ENCODE measurements at regions of chr2 and their contacts with region 1.

Region 1: GRCh38 chr2:207238831-207239701 is 73.3 kb upstream of the KLF7 start:
- DNase-seq: no peak
- H3K4me3 Mint-ChIP-seq: peak overlapping the region; percentile 50
- H3K27ac Mint-ChIP-seq: peak overlapping the region; percentile 73
- H3K4me1 Mint-ChIP-seq: peaks cover 19% of the 10 kb centered on the region
- H3K27me3 Mint-ChIP-seq: no peaks in the 10 kb centered on the region

Region 2: GRCh38 chr2:207073801-207074678 is 165.0 kb before region 1 on chr2:
- intact Hi-C with region 1: loop called (anchors 5 kb)
- DNase-seq: peak; percentile 39
- H3K4me3 Mint-ChIP-seq: peak overlapping the region; percentile 71
- H3K27ac Mint-ChIP-seq: peak overlapping the region; percentile 79
- H3K4me1 Mint-ChIP-seq: peaks cover 46% of the 10 kb centered on the region
- H3K27me3 Mint-ChIP-seq: no peaks in the 10 kb centered on the region

Region 3: DNA sequence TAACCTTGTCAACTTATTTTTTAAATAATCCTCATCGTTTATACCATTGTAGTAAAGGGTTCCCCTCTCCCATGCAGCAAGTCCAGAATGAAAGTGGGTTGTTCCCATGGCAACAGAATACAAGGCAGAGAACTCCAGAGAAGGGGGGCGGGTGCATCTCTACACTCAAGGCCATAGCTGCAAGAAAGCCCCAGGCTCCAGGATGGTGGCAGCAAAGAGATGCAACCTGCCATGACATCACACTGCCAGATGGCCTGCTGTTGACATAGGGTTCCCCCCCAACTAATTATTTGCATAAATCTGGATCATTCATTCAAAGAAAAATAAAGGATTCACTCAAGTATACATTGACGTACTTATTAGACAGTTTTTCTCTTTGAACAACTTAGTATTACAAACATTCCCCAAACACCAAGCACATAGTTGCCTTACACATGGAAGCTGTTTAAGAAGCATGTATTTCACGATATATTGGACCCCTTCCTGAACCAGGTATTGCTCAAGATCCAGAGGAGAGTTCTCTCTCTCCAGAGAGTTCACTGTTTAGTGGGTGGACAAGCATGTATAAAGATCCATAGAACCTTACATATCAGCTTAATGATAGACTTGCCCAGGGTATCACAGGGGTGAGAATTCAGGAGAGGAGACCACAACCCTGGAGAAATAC is 14.0 kb after region 1 on chr2:
- intact Hi-C with region 1: loop called (anchors 1 kb)
- DNase-seq: no peak
- H3K4me3 Mint-ChIP-seq: no peak overlapping the region
- H3K27ac Mint-ChIP-seq: no peak overlapping the region
- H3K4me1 Mint-ChIP-seq: peaks cover 36% of the 10 kb centered on the region
- H3K27me3 Mint-ChIP-seq: peaks cover 2% of the 10 kb centered on the region

Region 4: GRCh38 chr2:207311316-207312005 is 72.4 kb after region 1 on chr2:
- intact Hi-C with region 1: loop called (anchors 1 kb)
- DNase-seq: no peak
- H3K4me3 Mint-ChIP-seq: no peak overlapping the region
- H3K27ac Mint-ChIP-seq: peak overlapping the region; percentile 88
- H3K4me1 Mint-ChIP-seq: peaks cover 49% of the 10 kb centered on the region
- H3K27me3 Mint-ChIP-seq: no peaks in the 10 kb centered on the region

Region 5: DNA sequence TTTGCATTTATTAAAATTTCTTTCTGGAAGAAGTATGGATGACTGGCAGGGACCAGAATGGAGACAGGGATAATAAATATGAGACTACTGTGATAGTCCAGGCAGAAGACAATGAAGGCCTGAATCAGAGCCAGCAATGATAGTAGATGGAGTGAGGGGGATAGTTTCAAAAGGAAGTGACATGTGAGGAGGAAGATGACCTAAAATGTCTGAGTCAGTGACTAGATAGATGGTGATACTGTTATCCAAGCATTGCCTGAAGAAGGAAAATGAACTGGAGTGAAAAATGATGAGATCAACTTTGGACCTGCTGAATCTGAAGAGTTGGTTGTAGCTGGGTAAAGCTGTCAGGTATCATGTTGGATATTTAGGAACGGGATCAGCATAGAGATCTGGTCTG is 84.9 kb after region 1 on chr2:
- intact Hi-C with region 1: no loop called
- DNase-seq: no peak
- H3K4me3 Mint-ChIP-seq: no peak overlapping the region
- H3K27ac Mint-ChIP-seq: no peak overlapping the region
- H3K4me1 Mint-ChIP-seq: peaks cover 37% of the 10 kb centered on the region
- H3K27me3 Mint-ChIP-seq: no peaks in the 10 kb centered on the region

Region 6: DNA sequence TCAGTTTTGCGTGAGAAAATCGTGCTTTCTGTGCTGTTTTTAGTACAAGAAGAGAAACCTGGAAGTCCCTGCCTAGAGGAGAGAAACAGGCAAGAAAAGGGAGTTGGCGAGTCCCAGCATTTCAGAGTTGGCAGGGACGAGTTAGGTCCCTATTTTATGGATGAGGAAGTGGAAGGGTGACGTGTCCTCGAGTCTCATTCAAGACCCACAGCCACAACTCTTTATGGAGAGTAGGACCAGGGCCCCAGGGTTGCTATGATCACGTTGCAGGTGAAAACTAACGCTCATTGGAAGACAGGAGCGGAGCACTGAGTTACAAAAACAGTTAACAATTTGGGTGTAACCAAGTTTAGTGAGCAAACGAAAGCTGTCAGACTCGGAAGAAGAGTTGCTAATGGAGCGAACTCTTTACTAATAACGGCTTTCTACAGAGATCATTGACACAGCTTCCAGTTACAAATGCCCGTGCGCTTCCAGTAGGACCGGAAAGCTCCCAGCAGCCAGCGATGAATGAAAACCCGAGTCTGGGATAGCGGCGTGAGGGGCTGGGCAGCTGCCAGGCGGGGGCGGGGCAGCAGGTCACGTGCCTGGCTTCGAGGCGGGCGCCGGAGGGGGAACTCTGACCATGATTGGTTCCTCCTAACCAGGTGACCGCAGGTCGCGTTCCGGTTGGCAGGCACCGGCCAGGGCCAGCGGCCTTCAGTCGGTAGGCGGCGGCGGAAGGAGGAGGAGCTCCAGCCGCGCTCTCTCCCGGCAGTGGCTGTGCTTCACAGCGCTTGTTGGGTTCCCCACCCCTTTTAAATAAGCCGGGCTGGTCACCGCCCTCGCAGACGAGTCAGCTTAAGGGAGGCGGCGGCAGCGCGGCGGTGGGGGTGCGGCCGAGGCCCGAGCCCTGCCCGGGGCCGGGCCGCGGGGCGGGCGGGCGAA is 472.0 kb after region 1 on chr2 and contains the start of gene CCNYL1:
- intact Hi-C with region 1: loop called (anchors 5 kb)
- DNase-seq: peak; percentile 98
- H3K4me3 Mint-ChIP-seq: peak within 1 kb of the TSS; percentile 96
- H3K27ac Mint-ChIP-seq: peak within 1 kb of the TSS; percentile 76
- H3K4me1 Mint-ChIP-seq: peaks cover 36% of the 10 kb centered on the region
- H3K27me3 Mint-ChIP-seq: no peaks in the 10 kb centered on the region
- total RNA-seq, gene CCNYL1: 6.8 and 8.7 TPM in 2 replicates